Activated T-helper 1 cell treated with anti-CD3 and anti-CD28 coated beads, Interleukin-12 subunit alpha, Interleukin-12 subunit beta, Interleukin-2, Interleukin-4 antibody, amounts not matched to agents 30 ng/mL and 10 ng/mL and 1 ng/mL, durations not matched to agents 14 hours and 24 hours and 36 hours (primary cell): ENCODE measurements at regions of chr11 and their contacts with region 1.

Region 1: GRCh38 chr11:44574610-44575287 is 9.3 kb downstream of the CD82 start:
- DNase-seq: peak; percentile 52
- H3K4me3 Mint-ChIP-seq: peak overlapping the region; percentile 82
- H3K27ac Mint-ChIP-seq: peak overlapping the region; percentile 96
- H3K4me1 Mint-ChIP-seq: peaks cover 91% of the 10 kb centered on the region
- H3K27me3 Mint-ChIP-seq: no peaks in the 10 kb centered on the region

Region 2: GRCh38 chr11:44530413-44531115 is 44.2 kb before region 1 on chr11:
- intact Hi-C with region 1: loop called (anchors 1 kb)
- DNase-seq: peak; percentile 58
- H3K4me3 Mint-ChIP-seq: peak overlapping the region; percentile 68
- H3K27ac Mint-ChIP-seq: peak overlapping the region; percentile 89
- H3K4me1 Mint-ChIP-seq: peaks cover 40% of the 10 kb centered on the region
- H3K27me3 Mint-ChIP-seq: no peaks in the 10 kb centered on the region

Region 3: GRCh38 chr11:44596525-44597276 is 22.0 kb after region 1 on chr11:
- intact Hi-C with region 1: loop called (anchors 1 kb)
- DNase-seq: peak; percentile 87
- H3K4me3 Mint-ChIP-seq: peak overlapping the region; percentile 71
- H3K27ac Mint-ChIP-seq: peak overlapping the region; percentile 96
- H3K4me1 Mint-ChIP-seq: peaks cover 89% of the 10 kb centered on the region
- H3K27me3 Mint-ChIP-seq: no peaks in the 10 kb centered on the region

Region 4: GRCh38 chr11:44611687-44612434 is 37.1 kb after region 1 on chr11:
- intact Hi-C with region 1: loop called (anchors 1 kb)
- DNase-seq: peak; percentile 68
- H3K4me3 Mint-ChIP-seq: peak overlapping the region; percentile 15
- H3K27ac Mint-ChIP-seq: peak overlapping the region; percentile 82
- H3K4me1 Mint-ChIP-seq: peaks cover 92% of the 10 kb centered on the region
- H3K27me3 Mint-ChIP-seq: no peaks in the 10 kb centered on the region

Region 5: GRCh38 chr11:44861849-44862749 is 287.4 kb after region 1 on chr11:
- intact Hi-C with region 1: loop called (anchors 2 kb)
- DNase-seq: peak; percentile 76
- H3K4me3 Mint-ChIP-seq: no peak overlapping the region
- H3K27ac Mint-ChIP-seq: peak overlapping the region; percentile 68
- H3K4me1 Mint-ChIP-seq: peaks cover 21% of the 10 kb centered on the region
- H3K27me3 Mint-ChIP-seq: peaks cover 56% of the 10 kb centered on the region